ENCODE measurements at regions of chr1 and their contacts with region 1.

Region 1: GRCh38 chr1:179365320-179366092 is at the start of gene AXDND1:
- DNase-seq: peak; percentile 86
- H3K4me3 ChIP-seq: peak within 1 kb of the TSS; percentile 79 to 85 (median 80)
- H3K27ac ChIP-seq: peak within 1 kb of the TSS; percentile 97
- H3K4me1 ChIP-seq: peaks cover 4% of the 10 kb centered on the region
- H3K27me3 ChIP-seq: peaks cover 0 to 1% of the 10 kb centered on the region in 2 experiments
- CTCF ChIP-seq: no peak
- POLR2A ChIP-seq: peak; percentile 32
- total RNA-seq, gene AXDND1: 0.67 TPM in 1 of 2 replicates, not detected in the other

Region 2: DNA sequence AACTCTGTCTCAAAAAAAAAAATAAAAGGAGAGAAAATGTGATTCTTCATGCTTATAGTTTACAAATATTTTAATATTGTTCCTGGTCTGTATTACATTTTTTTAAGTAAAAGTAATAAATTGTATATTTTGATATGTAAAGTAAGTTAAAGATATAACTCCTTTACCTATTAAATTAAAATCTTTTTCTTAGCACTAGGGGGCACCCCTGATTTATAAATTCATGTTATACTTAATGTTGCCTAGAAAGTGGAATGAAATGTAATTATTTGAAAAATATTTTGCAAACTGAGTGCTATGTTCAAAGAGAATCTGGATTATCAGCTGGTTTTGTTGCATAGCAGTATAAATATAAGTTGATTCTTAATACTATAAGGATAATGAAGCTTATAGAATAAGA is 591.2 kb before region 1 on chr1:
- CTCF ChIA-PET with region 1: no interaction called
- POLR2A ChIA-PET with region 1: no interaction called
- dilution Hi-C with region 1: no loop called
- intact Hi-C with region 1: loop called (anchors 5 kb)
- DNase-seq: peak; percentile 29
- H3K4me3 ChIP-seq: no peak overlapping the region
- H3K27ac ChIP-seq: no peak overlapping the region
- H3K4me1 ChIP-seq: no peaks in the 10 kb centered on the region
- H3K27me3 ChIP-seq: no peaks in the 10 kb centered on the region
- CTCF ChIP-seq: peak in 1 of 2 donors; percentile 9
- POLR2A ChIP-seq: no peak

Region 3: DNA sequence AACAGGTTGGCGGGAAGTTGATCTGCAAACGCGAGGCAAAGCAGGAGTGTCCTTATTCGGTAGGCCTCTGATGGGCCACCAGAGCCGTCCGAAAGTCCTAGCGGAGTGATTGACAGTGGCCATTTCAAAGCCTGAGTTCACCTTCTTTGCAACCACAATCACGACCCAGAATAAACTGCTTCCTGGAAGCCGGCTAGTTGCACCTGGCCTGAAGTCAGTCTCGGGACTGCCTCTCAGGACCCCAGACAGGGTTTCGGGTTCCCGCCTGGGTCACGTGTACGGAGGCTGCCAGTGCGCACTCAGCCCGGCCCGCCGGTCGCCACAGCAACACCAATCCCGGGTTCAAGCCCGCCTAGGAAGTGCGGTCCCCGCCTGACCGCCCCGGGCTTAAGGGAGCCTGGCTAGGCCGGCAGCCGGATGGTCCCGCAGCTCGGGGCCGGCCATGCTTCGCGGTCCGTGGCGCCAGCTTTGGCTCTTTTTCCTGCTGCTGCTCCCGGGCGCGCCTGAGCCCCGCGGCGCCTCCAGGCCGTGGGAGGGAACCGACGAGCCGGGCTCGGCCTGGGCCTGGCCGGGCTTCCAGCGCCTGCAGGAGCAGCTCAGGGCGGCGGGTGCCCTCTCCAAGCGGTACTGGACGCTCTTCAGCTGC is 283.7 kb before region 1 on chr1 and contains the start of gene TOR3A:
- CTCF ChIA-PET with region 1: interaction called, 27 read pairs
- POLR2A ChIA-PET with region 1: no interaction called
- dilution Hi-C with region 1: no loop called
- intact Hi-C with region 1: loop called (anchors 1 kb)
- DNase-seq: peak; percentile 89
- H3K4me3 ChIP-seq: peak within 1 kb of the TSS; percentile 68 to 80 (median 77)
- H3K27ac ChIP-seq: peak within 1 kb of the TSS; percentile 62
- H3K4me1 ChIP-seq: peaks cover 14% of the 10 kb centered on the region
- H3K27me3 ChIP-seq: no peaks in the 10 kb centered on the region
- CTCF ChIP-seq: no peak
- POLR2A ChIP-seq: peak; percentile 88
- total RNA-seq, gene TOR3A: 16.7 and 22.4 TPM in 2 replicates

Region 4: DNA sequence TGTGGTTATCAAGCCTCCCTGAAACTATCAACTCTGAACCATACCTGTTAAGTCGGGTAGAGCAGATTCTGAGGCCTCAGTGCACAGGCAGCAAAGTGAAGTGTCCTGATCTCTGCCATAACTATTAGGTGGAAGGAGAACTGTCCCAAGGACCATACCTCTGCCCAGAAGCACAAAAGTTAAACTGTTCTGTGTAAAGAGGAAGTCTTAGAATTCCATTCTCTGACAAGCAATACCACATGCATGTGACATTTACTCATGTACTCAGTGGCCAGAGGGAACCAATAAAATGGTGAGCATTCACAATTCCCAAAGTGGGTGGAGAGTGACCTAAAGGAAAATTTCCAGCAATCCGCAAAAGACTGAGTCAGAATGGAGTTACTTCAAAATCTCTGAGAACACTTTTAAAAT is 222.6 kb before region 1 on chr1:
- CTCF ChIA-PET with region 1: no interaction called
- POLR2A ChIA-PET with region 1: no interaction called
- dilution Hi-C with region 1: no loop called
- intact Hi-C with region 1: loop called (anchors 5 kb)
- DNase-seq: peak; percentile 97
- H3K4me3 ChIP-seq: peak overlapping the region; percentile 83 to 99 (median 87)
- H3K27ac ChIP-seq: peak overlapping the region; percentile 95
- H3K4me1 ChIP-seq: peaks cover 49% of the 10 kb centered on the region
- H3K27me3 ChIP-seq: no peaks in the 10 kb centered on the region
- CTCF ChIP-seq: no peak
- POLR2A ChIP-seq: peak; percentile 99

Region 5: DNA sequence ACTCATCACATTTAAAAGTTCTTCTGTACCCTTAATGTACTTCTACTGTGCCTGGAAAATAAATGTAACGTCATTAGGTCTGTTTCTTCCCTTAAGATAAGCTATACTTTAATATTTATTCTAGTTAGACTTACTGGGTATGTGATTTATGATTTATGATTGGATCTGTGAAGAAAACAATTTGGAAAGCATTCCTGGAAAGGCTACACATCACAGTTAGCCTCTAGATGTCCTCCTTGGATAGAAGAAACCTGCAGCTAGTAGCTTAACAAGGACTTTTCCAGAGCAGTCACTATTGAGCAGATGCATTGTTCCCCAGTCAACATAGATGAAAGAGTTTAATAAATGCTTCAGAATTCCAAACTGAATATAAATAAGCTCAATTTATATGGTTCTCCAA is 113.8 kb before region 1 on chr1:
- CTCF ChIA-PET with region 1: interaction called, 42 read pairs
- POLR2A ChIA-PET with region 1: no interaction called
- dilution Hi-C with region 1: no loop called
- intact Hi-C with region 1: loop called (anchors 1 kb)
- DNase-seq: peak; percentile 48
- H3K4me3 ChIP-seq: no peak overlapping the region
- H3K27ac ChIP-seq: no peak overlapping the region
- H3K4me1 ChIP-seq: peaks cover 8% of the 10 kb centered on the region
- H3K27me3 ChIP-seq: no peaks in the 10 kb centered on the region
- CTCF ChIP-seq: peak in 1 of 2 donors; percentile 34
- POLR2A ChIP-seq: no peak